Activated CD8-positive, alpha-beta T cell treated with anti-CD3 and anti-CD28 coated beads for 36 hours (primary cell): ENCODE measurements at regions of chr1 and their contacts with region 1.

Region 1: GRCh38 chr1:226736908-226737818 is 1.9 kb downstream of the ITPKB start:
- DNase-seq: peak; percentile 73
- ATAC-seq: peak; percentile 46
- H3K4me3 Mint-ChIP-seq: peak overlapping the region; percentile 92
- H3K27ac Mint-ChIP-seq: peak overlapping the region; percentile 88
- H3K4me1 Mint-ChIP-seq: peaks cover 39% of the 10 kb centered on the region
- H3K27me3 Mint-ChIP-seq: no peaks in the 10 kb centered on the region
- CTCF ChIP-seq: peak; percentile 23

Region 2: DNA sequence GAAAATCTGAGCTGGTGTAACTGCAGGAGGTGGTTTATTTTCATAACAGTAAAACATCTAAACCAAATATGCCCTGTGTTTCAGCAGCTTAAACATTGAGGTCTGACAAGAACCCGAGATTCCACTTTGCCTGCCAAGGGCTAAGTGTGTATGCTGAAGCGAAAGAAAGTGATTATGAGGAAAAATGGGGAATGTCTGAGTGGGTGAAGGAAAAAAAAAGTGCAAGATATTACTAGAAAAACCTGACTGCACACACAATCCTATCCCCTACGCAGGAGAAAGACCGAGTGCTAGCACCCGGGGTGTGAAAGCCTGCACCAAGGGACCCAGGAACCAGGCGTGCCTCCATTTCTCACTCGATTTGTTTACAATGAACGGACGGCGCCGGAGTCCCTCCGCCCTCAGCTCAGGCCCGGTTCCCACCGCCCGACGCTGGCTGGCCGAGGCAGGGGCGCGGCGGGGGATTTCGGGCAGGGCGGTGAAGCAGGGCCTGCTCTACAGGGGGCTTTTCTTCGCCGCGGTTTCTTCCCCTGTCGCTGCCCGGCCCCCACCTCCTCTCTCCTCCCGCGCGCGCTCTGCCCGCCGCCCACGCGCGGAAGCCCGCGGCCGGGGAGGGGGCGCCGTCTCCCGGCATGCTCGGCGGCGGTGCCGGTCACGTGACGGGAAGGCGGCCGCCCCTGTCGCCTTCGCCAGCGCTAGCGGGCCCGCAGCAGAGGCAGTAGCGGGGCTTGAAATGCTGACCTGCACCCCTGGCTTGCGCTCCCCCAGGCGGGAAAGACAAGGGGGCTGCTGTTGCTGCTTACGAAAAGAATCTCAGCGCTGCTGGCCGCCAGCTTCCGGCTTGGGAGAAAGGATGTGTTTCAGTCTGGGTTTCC is 34.0 kb before region 1 on chr1:
- CTCF ChIA-PET with region 1: interaction called, 7 read pairs
- POLR2A ChIA-PET with region 1: interaction called, 71 read pairs
- intact Hi-C with region 1: no loop called
- DNase-seq: peak; percentile 84
- ATAC-seq: peak; percentile 76
- H3K4me3 Mint-ChIP-seq: peak overlapping the region; percentile 83
- H3K27ac Mint-ChIP-seq: peak overlapping the region; percentile 97
- H3K4me1 Mint-ChIP-seq: peaks cover 79% of the 10 kb centered on the region
- H3K27me3 Mint-ChIP-seq: no peaks in the 10 kb centered on the region
- CTCF ChIP-seq: no peak

Region 3: GRCh38 chr1:226772446-226773139 is 35.4 kb after region 1 on chr1:
- CTCF ChIA-PET with region 1: no interaction called
- POLR2A ChIA-PET with region 1: no interaction called
- intact Hi-C with region 1: no loop called
- DNase-seq: no peak
- ATAC-seq: no peak
- H3K4me3 Mint-ChIP-seq: no peak overlapping the region
- H3K27ac Mint-ChIP-seq: no peak overlapping the region
- H3K4me1 Mint-ChIP-seq: peaks cover 5% of the 10 kb centered on the region
- H3K27me3 Mint-ChIP-seq: no peaks in the 10 kb centered on the region
- CTCF ChIP-seq: no peak

Region 4: GRCh38 chr1:226798427-226799411 is 61.6 kb after region 1 on chr1:
- CTCF ChIA-PET with region 1: no interaction called
- POLR2A ChIA-PET with region 1: interaction called, 6 read pairs
- intact Hi-C with region 1: loop called (anchors 5 kb)
- DNase-seq: peak; percentile 88
- ATAC-seq: peak; percentile 81
- H3K4me3 Mint-ChIP-seq: peak overlapping the region; percentile 62
- H3K27ac Mint-ChIP-seq: peak overlapping the region; percentile 95
- H3K4me1 Mint-ChIP-seq: peaks cover 38% of the 10 kb centered on the region
- H3K27me3 Mint-ChIP-seq: peaks cover 1% of the 10 kb centered on the region
- CTCF ChIP-seq: no peak

Region 5: GRCh38 chr1:226827968-226828513 is 90.9 kb after region 1 on chr1:
- CTCF ChIA-PET with region 1: interaction called, 10 read pairs
- POLR2A ChIA-PET with region 1: interaction called, 4 read pairs
- intact Hi-C with region 1: no loop called
- DNase-seq: peak; percentile 97
- ATAC-seq: peak; percentile 99
- H3K4me3 Mint-ChIP-seq: peak overlapping the region; percentile 53
- H3K27ac Mint-ChIP-seq: peak overlapping the region; percentile 93
- H3K4me1 Mint-ChIP-seq: peaks cover 36% of the 10 kb centered on the region
- H3K27me3 Mint-ChIP-seq: no peaks in the 10 kb centered on the region
- CTCF ChIP-seq: peak; percentile 89